Activated T-helper 1 cell treated with anti-CD3 and anti-CD28 coated beads, Interleukin-12 subunit alpha, Interleukin-12 subunit beta, Interleukin-2, Interleukin-4 antibody, amounts not matched to agents 30 ng/mL and 10 ng/mL and 1 ng/mL, durations not matched to agents 14 hours and 24 hours and 36 hours (primary cell): ENCODE measurements at regions of chrX and their contacts with region 1.

Region 1: GRCh38 chrX:138014577-138014976 is 448.6 kb downstream of the ZIC3 start:
- DNase-seq: no peak
- H3K4me3 Mint-ChIP-seq: no peak overlapping the region
- H3K27ac Mint-ChIP-seq: no peak overlapping the region
- H3K4me1 Mint-ChIP-seq: no peaks in the 10 kb centered on the region
- H3K27me3 Mint-ChIP-seq: peaks cover 2% of the 10 kb centered on the region

Region 2: DNA sequence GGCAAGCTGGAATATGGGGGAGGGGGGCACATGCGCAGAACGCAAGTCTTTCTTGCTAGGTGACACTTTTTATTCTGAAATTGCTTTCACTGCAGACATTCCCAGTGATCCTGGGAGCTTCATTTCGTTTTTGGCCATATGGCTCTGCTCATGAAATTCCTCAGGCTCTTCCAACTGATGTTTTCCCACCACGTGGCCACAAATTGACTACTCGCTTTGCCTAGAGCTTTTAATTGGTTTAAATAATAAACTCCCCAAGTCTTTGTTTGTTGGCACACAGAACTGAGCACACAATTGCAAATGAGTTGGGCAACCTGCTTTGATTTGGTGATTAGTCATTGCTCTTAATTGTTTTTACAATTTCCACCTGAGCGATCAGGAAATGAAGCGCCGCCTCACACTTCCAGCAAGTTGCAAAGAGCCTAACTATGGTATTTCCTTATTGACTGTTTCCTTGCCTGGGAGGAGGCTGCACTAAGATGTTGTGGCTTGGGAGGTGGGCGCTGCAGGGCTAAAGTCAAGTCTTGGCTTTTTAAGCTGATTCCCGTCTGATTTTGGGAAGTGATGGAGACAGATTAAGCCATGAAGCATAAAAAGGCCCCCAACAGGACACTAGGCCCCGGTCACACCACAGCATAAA is 166.2 kb before region 1 on chrX:
- intact Hi-C with region 1: no loop called
- DNase-seq: no peak
- H3K4me3 Mint-ChIP-seq: no peak overlapping the region
- H3K27ac Mint-ChIP-seq: no peak overlapping the region
- H3K4me1 Mint-ChIP-seq: no peaks in the 10 kb centered on the region
- H3K27me3 Mint-ChIP-seq: no peaks in the 10 kb centered on the region

Region 3: DNA sequence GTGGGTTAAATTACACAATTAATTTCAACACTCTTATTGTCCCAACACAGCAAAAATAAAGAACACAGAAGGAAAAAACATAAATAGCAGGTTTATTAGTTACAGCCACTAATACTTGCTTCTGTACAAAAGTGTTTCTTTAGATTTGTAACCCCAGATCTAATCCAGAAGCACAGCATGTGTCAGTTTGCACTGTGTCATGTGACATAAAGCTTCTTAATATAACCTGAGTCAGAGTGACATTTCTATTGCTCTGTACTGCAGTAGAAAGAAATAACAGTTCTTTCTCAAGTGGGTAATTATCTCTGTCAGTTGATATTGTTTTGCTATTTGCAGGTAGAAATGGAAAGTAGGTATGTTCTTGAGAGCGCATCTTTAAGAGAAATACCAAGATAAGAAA is 26.1 kb before region 1 on chrX:
- intact Hi-C with region 1: no loop called
- DNase-seq: no peak
- H3K4me3 Mint-ChIP-seq: no peak overlapping the region
- H3K27ac Mint-ChIP-seq: no peak overlapping the region
- H3K4me1 Mint-ChIP-seq: no peaks in the 10 kb centered on the region
- H3K27me3 Mint-ChIP-seq: no peaks in the 10 kb centered on the region

Region 4: GRCh38 chrX:138026211-138026610 is 11.6 kb after region 1 on chrX:
- intact Hi-C with region 1: loop called (anchors 1 kb)
- DNase-seq: no peak
- H3K4me3 Mint-ChIP-seq: no peak overlapping the region
- H3K27ac Mint-ChIP-seq: no peak overlapping the region
- H3K4me1 Mint-ChIP-seq: no peaks in the 10 kb centered on the region
- H3K27me3 Mint-ChIP-seq: no peaks in the 10 kb centered on the region